ENCODE measurements at regions of chr1 and their contacts with region 1.

Region 1: DNA sequence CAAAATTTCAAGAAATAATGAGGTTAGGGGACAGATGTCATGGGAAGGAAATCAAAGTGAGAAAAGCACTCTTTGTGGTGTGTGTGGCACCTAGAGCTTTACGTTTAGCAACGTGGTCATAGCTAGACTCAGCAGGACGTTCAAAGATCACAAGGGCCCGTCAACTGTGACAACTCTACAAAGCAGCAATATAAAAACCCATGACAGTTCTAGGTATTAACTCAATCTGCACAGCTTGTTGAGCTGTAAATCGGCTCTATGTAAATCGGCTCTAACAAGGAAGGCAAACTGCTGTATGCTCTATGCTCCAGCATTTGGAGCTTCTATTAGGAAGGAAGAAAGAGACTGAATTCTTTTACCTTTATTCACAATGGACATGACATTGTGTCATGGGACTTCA is 64.8 kb downstream of the TP53BP2 start:
- DNase-seq: no peak
- ATAC-seq: no peak
- H3K4me3 ChIP-seq: no peak overlapping the region
- H3K4me3 Mint-ChIP-seq: no peak overlapping the region
- H3K27ac ChIP-seq: no peak overlapping the region
- H3K27ac Mint-ChIP-seq: peak overlapping the region; percentile 16
- H3K4me1 ChIP-seq: peaks cover 4% of the 10 kb centered on the region
- H3K4me1 Mint-ChIP-seq: peaks cover 12% of the 10 kb centered on the region
- H3K27me3 ChIP-seq: no peaks in the 10 kb centered on the region
- H3K27me3 Mint-ChIP-seq: no peaks in the 10 kb centered on the region
- CTCF ChIP-seq: no peak

Region 2: GRCh38 chr1:223763251-223763650 is 17.7 kb before region 1 on chr1:
- CTCF ChIA-PET with region 1: no interaction called
- POLR2A ChIA-PET with region 1: no interaction called
- intact Hi-C with region 1: no loop called
- DNase-seq: no peak
- ATAC-seq: no peak
- H3K4me3 ChIP-seq: no peak overlapping the region
- H3K4me3 Mint-ChIP-seq: no peak overlapping the region
- H3K27ac ChIP-seq: no peak overlapping the region
- H3K27ac Mint-ChIP-seq: no peak overlapping the region
- H3K4me1 ChIP-seq: no peaks in the 10 kb centered on the region
- H3K4me1 Mint-ChIP-seq: no peaks in the 10 kb centered on the region
- H3K27me3 ChIP-seq: no peaks in the 10 kb centered on the region
- H3K27me3 Mint-ChIP-seq: no peaks in the 10 kb centered on the region
- CTCF ChIP-seq: no peak

Region 3: DNA sequence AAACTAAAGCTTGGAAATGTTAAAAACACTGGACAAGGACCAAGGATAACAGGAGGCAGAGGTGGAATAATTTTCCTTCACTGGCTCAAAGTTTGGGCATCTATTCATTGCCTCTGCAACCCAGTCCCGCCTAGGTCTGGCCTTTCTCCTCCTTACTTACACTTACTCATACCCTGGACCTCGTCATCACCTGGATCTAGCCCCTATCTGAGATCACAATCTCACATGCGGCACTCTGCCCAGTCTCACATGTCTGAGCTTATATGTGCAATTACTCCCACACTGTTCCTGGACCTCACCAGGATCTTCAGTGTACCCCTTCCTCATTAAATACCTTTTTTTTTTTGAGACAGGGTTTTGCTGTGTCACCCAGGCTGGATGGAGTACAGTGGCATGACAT is 511.5 kb after region 1 on chr1:
- CTCF ChIA-PET with region 1: no interaction called
- POLR2A ChIA-PET with region 1: no interaction called
- intact Hi-C with region 1: loop called in 1 of 2 experiments (anchors 10 kb)
- DNase-seq: no peak
- ATAC-seq: no peak
- H3K4me3 ChIP-seq: no peak overlapping the region
- H3K4me3 Mint-ChIP-seq: no peak overlapping the region
- H3K27ac ChIP-seq: no peak overlapping the region
- H3K27ac Mint-ChIP-seq: no peak overlapping the region
- H3K4me1 ChIP-seq: no peaks in the 10 kb centered on the region
- H3K4me1 Mint-ChIP-seq: no peaks in the 10 kb centered on the region
- H3K27me3 ChIP-seq: no peaks in the 10 kb centered on the region
- H3K27me3 Mint-ChIP-seq: no peaks in the 10 kb centered on the region
- CTCF ChIP-seq: no peak